ENCODE measurements at regions of chr22 and their contacts with region 1.

Region 1: DNA sequence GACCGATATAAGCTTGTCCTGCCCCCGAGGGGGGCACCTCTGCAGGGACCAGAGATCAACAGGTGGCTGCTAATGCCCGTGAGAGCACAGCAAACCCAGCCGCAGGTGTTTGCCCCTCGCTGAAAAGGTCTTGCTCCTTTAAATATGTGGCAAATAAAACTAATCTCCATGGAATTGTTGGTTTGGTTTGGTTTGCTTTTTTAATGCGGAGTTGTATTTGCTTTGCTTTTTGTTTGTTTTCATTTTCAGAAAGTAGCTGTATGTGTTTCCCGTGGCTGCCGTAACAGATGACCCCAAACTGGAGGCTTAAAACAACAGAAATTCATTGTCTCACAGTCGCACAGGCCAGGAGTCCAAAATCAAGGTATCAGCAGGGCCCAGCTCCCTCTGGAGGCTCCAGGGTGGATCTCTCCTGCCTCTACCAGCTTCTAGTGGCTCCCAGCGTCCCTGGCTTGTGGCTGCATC is 93.0 kb downstream of the CELSR1 start:
- DNase-seq: peak; percentile 87

Region 2: DNA sequence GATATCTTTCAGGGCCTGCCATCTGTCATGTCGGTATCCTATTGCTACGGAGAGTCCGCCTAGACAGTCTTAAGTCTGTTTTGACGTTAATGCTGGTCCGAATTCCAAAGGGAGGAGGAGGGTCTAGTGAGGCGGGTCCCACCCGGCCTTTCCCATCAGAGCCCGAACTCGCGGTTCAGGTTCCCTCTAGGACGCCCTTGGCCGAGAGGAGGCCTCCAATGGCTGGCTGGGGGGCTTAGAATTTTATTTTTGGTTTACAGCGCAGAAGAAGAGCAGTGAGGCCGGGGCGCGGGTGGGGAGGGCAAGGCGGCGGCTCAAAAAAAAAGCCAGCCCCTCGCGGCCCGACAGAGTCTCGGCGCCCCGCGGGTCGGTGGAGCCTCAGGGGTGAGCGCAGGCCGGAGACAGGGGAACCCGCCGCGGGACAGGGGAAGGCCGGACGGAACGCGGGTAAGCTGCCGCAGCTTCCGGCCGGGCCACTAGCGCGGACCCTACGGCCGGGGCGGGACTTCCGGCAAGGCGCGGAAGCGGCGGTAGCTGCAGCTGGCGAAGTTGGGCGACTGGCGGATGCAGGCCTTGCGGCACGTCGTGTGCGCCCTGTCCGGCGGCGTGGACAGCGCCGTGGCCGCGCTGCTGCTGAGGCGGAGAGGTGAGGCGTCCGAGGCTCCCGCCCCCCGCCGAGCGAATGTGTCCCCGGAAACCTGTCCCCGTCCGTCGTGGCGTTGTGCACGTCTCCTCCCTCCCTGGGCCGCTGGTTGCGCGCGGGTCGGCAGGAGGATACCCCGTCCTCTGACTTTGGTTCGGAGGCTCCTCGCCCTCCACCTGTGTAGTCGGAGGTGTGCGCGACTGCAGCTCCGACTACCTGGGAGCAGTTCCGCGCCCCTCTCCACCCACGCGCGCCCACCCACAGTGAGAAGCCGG is 109.0 kb before region 1 on chr22 and contains the start of gene TRMU:
- in situ Hi-C with region 1: loop called (anchors 10 kb)
- DNase-seq: peak; percentile 82
- total RNA-seq, gene TRMU: 63.2 and 65.1 TPM in 2 replicates

Measured in Caki2 (cell line).